Activated naive CD4-positive, alpha-beta T cell treated with anti-CD3 and anti-CD28 coated beads for 36 hours (primary cell): ENCODE measurements at regions of chr4 and their contacts with region 1.

Region 1: GRCh38 chr4:174222266-174222872 is 61.1 kb downstream of the FBXO8 start:
- DNase-seq: peak; percentile 13
- H3K4me3 Mint-ChIP-seq: no peak overlapping the region
- H3K27ac Mint-ChIP-seq: no peak overlapping the region
- H3K4me1 Mint-ChIP-seq: peaks cover 9% of the 10 kb centered on the region
- H3K27me3 Mint-ChIP-seq: peaks cover 39% of the 10 kb centered on the region

Region 2: GRCh38 chr4:173334085-173334772 is 888.1 kb before region 1 on chr4 and contains the start of gene HMGB2:
- CTCF ChIA-PET with region 1: no interaction called
- intact Hi-C with region 1: loop called (anchors 10 kb)
- DNase-seq: peak; percentile 100
- H3K4me3 Mint-ChIP-seq: peak within 1 kb of the TSS; percentile 99
- H3K27ac Mint-ChIP-seq: peak within 1 kb of the TSS; percentile 99
- H3K4me1 Mint-ChIP-seq: peaks cover 15% of the 10 kb centered on the region
- H3K27me3 Mint-ChIP-seq: peaks cover 12% of the 10 kb centered on the region
- total RNA-seq, gene HMGB2: 752 to 787 TPM

Region 3: GRCh38 chr4:173529477-173530325 is 692.7 kb before region 1 on chr4 and contains the start of gene HAND2:
- CTCF ChIA-PET with region 1: no interaction called
- intact Hi-C with region 1: loop called (anchors 5 kb)
- DNase-seq: no peak
- H3K4me3 Mint-ChIP-seq: peak within 1 kb of the TSS; percentile 67
- H3K27ac Mint-ChIP-seq: no peak within 1 kb of the TSS
- H3K4me1 Mint-ChIP-seq: peaks cover 18% of the 10 kb centered on the region
- H3K27me3 Mint-ChIP-seq: peaks cover 82% of the 10 kb centered on the region
- total RNA-seq, gene HAND2: not detected

Region 4: GRCh38 chr4:174318829-174319764 is 96.7 kb after region 1 on chr4:
- CTCF ChIA-PET with region 1: interaction called, 8 read pairs
- intact Hi-C with region 1: loop called (anchors 1 kb)
- DNase-seq: no peak
- H3K4me3 Mint-ChIP-seq: no peak overlapping the region
- H3K27ac Mint-ChIP-seq: no peak overlapping the region
- H3K4me1 Mint-ChIP-seq: no peaks in the 10 kb centered on the region
- H3K27me3 Mint-ChIP-seq: no peaks in the 10 kb centered on the region

Region 5: GRCh38 chr4:174522183-174523048 is 300.0 kb after region 1 on chr4 and contains the start of gene HPGD:
- CTCF ChIA-PET with region 1: no interaction called
- intact Hi-C with region 1: loop called (anchors 5 kb)
- DNase-seq: peak; percentile 73
- H3K4me3 Mint-ChIP-seq: peak within 1 kb of the TSS; percentile 73
- H3K27ac Mint-ChIP-seq: peak within 1 kb of the TSS; percentile 46
- H3K4me1 Mint-ChIP-seq: peaks cover 13% of the 10 kb centered on the region
- H3K27me3 Mint-ChIP-seq: peaks cover 36% of the 10 kb centered on the region
- total RNA-seq, gene HPGD: 1.5 to 2.8 TPM

Region 6: DNA sequence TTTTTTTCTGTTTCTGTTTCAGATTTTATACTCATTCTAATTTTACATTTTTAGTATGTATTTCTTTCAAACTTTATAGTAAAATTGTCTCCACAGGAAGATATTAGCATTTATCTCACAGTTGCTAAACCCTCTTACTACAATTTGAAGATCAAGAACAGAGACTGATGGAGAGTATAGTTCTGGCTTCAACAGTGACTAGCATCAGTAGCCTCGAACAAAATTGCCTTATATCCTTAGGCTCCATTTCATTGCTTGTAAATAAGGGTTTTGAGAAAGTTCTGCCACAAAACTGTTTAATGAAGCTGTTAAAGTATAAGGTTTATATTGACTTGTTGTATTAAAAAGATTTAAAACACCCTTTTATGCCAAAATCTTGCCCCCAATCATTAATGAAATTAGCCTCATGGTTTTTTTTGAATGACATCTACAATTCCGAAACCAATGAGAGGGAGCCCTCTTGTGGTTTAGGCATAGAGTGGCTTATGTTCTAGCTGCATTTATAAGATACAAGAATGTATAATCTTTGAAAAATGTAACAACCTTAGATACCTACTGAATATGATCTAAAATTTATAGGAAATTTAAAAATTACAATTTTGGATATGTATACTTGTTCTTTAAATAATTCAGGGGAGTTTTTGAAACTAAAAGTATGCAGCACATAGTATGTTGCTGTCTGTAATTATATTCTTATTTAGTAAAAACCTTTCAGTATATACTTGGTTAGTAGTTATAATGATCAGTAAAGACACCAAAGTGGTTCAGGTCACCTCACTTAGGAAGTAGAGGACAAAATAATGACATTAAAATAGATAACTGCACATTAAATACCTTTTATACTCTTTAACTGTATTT is 409.8 kb after region 1 on chr4:
- CTCF ChIA-PET with region 1: no interaction called
- intact Hi-C with region 1: loop called (anchors 1 kb)
- DNase-seq: no peak
- H3K4me3 Mint-ChIP-seq: no peak overlapping the region
- H3K27ac Mint-ChIP-seq: no peak overlapping the region
- H3K4me1 Mint-ChIP-seq: no peaks in the 10 kb centered on the region
- H3K27me3 Mint-ChIP-seq: no peaks in the 10 kb centered on the region

Region 7: GRCh38 chr4:174714393-174715211 is 492.2 kb after region 1 on chr4:
- CTCF ChIA-PET with region 1: no interaction called
- intact Hi-C with region 1: loop called (anchors 1 kb)
- DNase-seq: peak; percentile 31
- H3K4me3 Mint-ChIP-seq: no peak overlapping the region
- H3K27ac Mint-ChIP-seq: no peak overlapping the region
- H3K4me1 Mint-ChIP-seq: no peaks in the 10 kb centered on the region
- H3K27me3 Mint-ChIP-seq: peaks cover 7% of the 10 kb centered on the region